Tibial artery (tissue), 4 donors: ENCODE measurements at regions of chr1 and their contacts with region 1.

Region 1: GRCh38 chr1:21189906-21190500 is 13.3 kb upstream of the EIF4G3 start:
- DNase-seq: no peak
- H3K4me3 ChIP-seq: no peak overlapping the region
- H3K27ac ChIP-seq: no peak overlapping the region
- H3K4me1 ChIP-seq: peaks cover 0 to 3% (median 0%) of the 10 kb centered on the region in 4 donors
- H3K27me3 ChIP-seq: no peaks in the 10 kb centered on the region
- CTCF ChIP-seq: no peak

Region 2: DNA sequence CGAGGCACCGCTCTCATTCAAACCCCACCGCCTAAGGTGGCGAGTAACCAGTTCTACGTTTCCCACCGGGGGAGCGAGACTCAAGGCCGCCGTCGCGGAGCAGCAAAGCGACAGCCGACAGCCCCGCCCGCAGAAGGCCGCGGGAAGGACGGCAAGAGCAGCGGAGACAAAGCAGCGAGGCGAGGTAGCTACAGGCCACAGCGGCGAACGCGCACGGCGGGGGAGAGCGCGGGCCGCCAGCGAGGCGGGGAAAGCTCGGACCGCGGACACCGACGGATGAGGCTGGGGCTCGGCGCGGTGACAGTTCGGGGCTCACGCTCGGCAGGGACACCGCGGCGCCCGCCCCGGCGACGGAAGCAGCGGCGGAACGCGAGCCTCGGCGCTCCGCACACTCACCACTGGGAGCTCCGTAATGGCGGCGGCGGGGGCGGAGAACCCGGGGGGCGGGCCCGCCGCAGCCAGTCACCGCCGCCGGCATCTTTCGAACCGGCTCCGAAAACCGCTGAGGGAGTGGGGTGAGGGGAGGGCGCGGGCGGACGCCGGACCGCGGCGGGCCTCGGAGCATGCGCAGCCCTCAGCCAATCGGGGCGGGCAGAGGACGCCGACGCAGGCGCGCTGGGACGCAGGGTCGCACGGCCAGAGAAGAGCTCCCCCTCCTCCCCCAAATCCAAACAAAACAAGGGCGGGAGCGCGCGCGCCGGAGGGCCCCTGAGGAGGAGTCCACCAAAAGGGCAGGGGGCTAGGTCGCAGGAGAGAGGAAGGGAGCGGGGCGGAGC is 403.6 kb before region 1 on chr1:
- intact Hi-C with region 1: loop called (anchors 10 kb)
- DNase-seq: peak; percentile 90 to 97
- H3K4me3 ChIP-seq: peak overlapping the region; percentile 75 to 88
- H3K27ac ChIP-seq: peak overlapping the region; percentile 98
- H3K4me1 ChIP-seq: peaks cover 0 to 42% (median 24%) of the 10 kb centered on the region in 4 donors
- H3K27me3 ChIP-seq: no peaks in the 10 kb centered on the region
- CTCF ChIP-seq: no peak

Region 3: DNA sequence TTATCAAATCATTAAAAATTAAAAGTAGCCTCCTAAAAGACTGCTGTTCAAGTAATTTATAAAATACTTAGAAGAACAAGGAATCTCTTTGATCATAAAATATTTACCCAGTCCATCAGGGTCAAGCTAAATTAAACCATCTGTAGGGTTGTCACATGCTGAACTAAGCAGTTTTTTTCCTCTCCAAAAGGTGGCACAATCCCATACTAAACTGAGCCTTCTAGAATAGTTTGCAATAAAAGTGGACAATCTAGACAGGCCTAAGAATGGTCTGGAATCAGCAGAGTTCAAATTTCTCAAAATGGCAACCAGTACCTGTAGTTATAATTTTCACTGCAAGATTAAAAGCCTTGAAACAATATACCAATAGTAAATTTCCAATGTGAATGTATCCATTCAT is 208.1 kb before region 1 on chr1:
- intact Hi-C with region 1: loop called (anchors 5 kb)
- DNase-seq: no peak
- H3K4me3 ChIP-seq: no peak overlapping the region
- H3K27ac ChIP-seq: no peak overlapping the region
- H3K4me1 ChIP-seq: peaks cover 0 to 9% (median 0%) of the 10 kb centered on the region in 4 donors
- H3K27me3 ChIP-seq: no peaks in the 10 kb centered on the region
- CTCF ChIP-seq: peak; percentile 25 to 33